Panc1 (cell line): ENCODE measurements at regions of chr10 and their contacts with region 1.

Region 1: GRCh38 chr10:122112625-122113160 is 123.7 kb downstream of the TACC2 start:
- DNase-seq: peak; percentile 70
- ATAC-seq: peak; percentile 89
- H3K4me3 ChIP-seq: peak overlapping the region; percentile 67 to 97
- H3K27ac ChIP-seq: peak overlapping the region; percentile 93
- H3K4me1 ChIP-seq: peaks cover 33% of the 10 kb centered on the region
- H3K27me3 ChIP-seq: no peaks in the 10 kb centered on the region
- CTCF ChIP-seq: peak; percentile 88

Region 2: GRCh38 chr10:121927841-121928527 is 184.7 kb before region 1 on chr10 and contains the start of gene ATE1:
- CTCF ChIA-PET with region 1: no interaction called
- POLR2A ChIA-PET with region 1: interaction called, 3 read pairs
- in situ Hi-C with region 1: no loop called
- intact Hi-C with region 1: loop called (anchors 5 kb)
- DNase-seq: no peak
- ATAC-seq: peak; percentile 94
- H3K4me3 ChIP-seq: peak within 1 kb of the TSS; percentile 69 to 79
- H3K27ac ChIP-seq: peak within 1 kb of the TSS; percentile 84
- H3K4me1 ChIP-seq: peaks cover 16% of the 10 kb centered on the region
- H3K27me3 ChIP-seq: no peaks in the 10 kb centered on the region
- CTCF ChIP-seq: no peak
- total RNA-seq, gene ATE1: 45.5 TPM

Region 3: DNA sequence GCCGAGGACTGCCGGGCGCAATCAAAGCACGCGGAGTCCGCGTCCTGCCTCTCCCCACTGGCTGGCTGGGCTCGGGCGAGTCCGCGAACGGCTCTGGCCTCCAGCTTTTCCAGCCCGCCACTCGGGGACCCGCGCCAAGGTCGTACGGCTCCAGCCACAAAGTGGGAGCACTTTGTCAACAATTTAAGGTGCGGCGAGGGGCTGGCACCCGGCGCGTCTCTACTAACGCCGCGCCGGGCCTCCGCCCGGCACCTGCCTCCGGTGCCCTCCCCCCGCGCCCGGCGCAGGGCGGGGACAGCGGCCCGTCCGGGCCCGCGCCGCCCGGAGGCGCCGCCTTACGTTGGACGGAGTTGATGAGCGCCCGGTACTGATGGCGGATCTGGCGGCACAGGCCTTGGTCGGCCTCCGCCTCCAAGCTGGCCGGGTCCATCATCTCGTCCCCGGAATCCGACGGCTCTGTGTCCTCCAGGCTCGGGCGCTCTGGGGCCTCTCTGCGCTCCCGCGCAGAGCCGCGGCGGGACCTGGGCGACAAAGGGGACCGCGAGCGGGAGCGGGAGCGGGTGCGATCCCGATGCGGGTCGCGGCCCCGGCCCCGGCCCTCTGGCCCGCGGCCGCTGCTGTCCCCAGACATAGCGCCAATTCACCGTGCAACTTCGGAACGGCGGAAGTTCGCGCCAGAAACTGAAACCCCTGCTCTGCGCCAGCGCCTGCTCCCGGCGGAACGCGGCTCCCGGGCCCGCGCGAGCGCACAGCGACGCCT is 138.0 kb before region 1 on chr10 and contains the start of gene NSMCE4A:
- CTCF ChIA-PET with region 1: interaction called, 3 read pairs
- POLR2A ChIA-PET with region 1: no interaction called
- in situ Hi-C with region 1: no loop called
- intact Hi-C with region 1: loop called (anchors 10 kb)
- DNase-seq: no peak
- ATAC-seq: peak; percentile 97
- H3K4me3 ChIP-seq: peak within 1 kb of the TSS; percentile 70 to 83
- H3K27ac ChIP-seq: peak within 1 kb of the TSS; percentile 85
- H3K4me1 ChIP-seq: peaks cover 8% of the 10 kb centered on the region
- H3K27me3 ChIP-seq: no peaks in the 10 kb centered on the region
- CTCF ChIP-seq: peak; percentile 98
- total RNA-seq, gene NSMCE4A: 72.2 TPM

Region 4: DNA sequence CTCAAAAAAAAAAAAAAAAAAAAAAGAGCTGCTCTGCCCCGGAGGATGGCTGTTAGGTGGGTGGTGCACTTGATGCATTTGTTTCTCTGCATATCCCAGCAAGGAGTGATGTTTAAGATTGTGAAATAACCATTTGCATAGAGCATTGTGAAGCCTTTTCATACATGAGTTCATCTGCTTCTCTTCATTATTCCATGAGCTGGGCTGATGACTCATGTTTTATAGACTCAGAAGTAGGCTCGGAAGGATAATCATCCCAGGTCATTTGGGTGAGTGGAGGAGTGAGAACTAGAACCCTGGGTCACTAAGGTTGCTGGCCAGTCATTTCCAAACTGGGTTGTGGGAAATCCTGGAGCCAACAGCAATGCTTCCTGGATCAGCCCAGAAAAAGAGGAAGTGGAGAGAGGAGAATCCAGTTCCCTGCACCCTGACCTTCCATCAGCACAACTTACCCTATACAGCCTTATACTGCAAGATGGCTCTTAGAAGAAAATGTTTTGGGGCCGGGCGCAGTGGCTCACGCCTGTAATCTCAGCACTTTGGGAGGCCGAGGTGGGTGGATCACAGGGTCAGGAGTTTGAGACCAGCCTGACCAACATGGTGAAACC is 78.4 kb before region 1 on chr10:
- CTCF ChIA-PET with region 1: interaction called, 4 read pairs
- POLR2A ChIA-PET with region 1: no interaction called
- in situ Hi-C with region 1: no loop called
- intact Hi-C with region 1: loop called (anchors 5 kb)
- DNase-seq: no peak
- ATAC-seq: peak; percentile 44; the same call in 1 of the 2 replicates
- H3K4me3 ChIP-seq: no peak overlapping the region
- H3K27ac ChIP-seq: no peak overlapping the region
- H3K4me1 ChIP-seq: peaks cover 21% of the 10 kb centered on the region
- H3K27me3 ChIP-seq: no peaks in the 10 kb centered on the region
- CTCF ChIP-seq: no peak

Region 5: GRCh38 chr10:122078326-122078725 is 34.4 kb before region 1 on chr10:
- CTCF ChIA-PET with region 1: interaction called, 10 read pairs
- POLR2A ChIA-PET with region 1: interaction called, 3 read pairs
- in situ Hi-C with region 1: no loop called
- intact Hi-C with region 1: no loop called
- DNase-seq: no peak
- ATAC-seq: peak; percentile 36; the same call in 1 of the 2 replicates
- H3K4me3 ChIP-seq: no peak overlapping the region
- H3K27ac ChIP-seq: peak overlapping the region; percentile 30
- H3K4me1 ChIP-seq: peaks cover 8% of the 10 kb centered on the region; the same call in 1 of the 2 replicates
- H3K27me3 ChIP-seq: no peaks in the 10 kb centered on the region
- CTCF ChIP-seq: no peak

Region 6: GRCh38 chr10:122126763-122127659 is 14.3 kb after region 1 on chr10:
- CTCF ChIA-PET with region 1: interaction called, 10 read pairs
- POLR2A ChIA-PET with region 1: interaction called, 4 read pairs
- in situ Hi-C with region 1: no loop called
- intact Hi-C with region 1: no loop called
- DNase-seq: no peak
- ATAC-seq: peak; percentile 83
- H3K4me3 ChIP-seq: peak overlapping the region in 1 of 2 experiments; percentile 41; a peak in 2 of 4 replicates
- H3K27ac ChIP-seq: peak overlapping the region; percentile 82
- H3K4me1 ChIP-seq: peaks cover 69% of the 10 kb centered on the region
- H3K27me3 ChIP-seq: no peaks in the 10 kb centered on the region
- CTCF ChIP-seq: no peak

Region 7: DNA sequence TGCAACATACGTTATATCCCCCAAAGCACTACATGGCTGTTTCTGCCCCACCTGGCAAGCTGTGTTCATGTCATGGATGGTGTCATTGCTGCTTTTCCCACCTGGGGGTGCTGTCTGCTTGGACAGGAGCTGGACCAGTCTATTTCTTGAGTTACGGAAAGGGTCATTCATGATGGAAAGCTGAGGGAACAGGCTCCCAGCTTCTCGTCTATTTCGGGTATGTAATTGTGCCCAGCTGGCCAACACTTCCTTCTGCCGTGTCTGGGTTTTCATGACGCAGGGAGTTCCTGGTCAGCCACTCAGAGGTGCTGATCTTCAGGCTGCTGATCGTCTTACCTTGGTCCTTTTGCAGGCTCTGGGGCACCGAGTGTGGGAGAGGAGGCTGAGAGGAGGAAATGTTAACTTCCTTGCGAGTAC is 167.0 kb after region 1 on chr10:
- CTCF ChIA-PET with region 1: no interaction called
- POLR2A ChIA-PET with region 1: no interaction called
- in situ Hi-C with region 1: no loop called
- intact Hi-C with region 1: no loop called
- DNase-seq: no peak
- ATAC-seq: peak; percentile 80
- H3K4me3 ChIP-seq: no peak overlapping the region
- H3K27ac ChIP-seq: no peak overlapping the region
- H3K4me1 ChIP-seq: peaks cover 8% of the 10 kb centered on the region
- H3K27me3 ChIP-seq: no peaks in the 10 kb centered on the region
- CTCF ChIP-seq: peak; percentile 90